AG04449 (cell line): ENCODE measurements at regions of chr12 and their contacts with region 1.

Region 1: DNA sequence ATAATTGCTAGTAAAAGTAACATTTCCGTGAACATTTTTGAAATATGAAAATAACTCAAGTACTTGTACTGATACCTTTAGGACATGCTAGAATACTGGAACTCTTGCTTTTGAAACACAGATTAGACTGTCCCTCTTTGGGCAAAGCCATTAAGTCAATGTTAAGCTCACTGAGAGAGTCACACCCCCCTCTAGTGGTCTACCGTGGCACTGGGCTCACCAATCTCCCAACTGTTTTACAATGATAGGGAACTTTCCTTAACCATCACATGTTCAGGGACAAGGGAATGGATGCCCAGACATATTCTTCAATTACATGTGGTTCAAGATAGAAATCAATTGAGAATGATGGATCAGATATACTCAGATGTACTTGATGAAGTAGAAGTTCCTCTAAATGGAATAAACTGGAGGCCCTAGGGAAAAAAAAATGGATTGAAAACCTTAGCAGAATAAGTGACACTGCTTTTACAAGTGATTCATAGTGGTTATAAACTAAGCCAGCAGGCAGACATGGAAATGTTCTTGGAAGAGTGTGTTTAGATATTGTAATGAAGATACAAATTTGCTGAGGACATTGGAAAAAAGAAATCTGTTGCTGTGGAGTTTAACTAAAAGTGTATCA is 17.8 kb downstream of the NANOG start:
- DNase-seq: no peak
- H3K4me3 ChIP-seq: no peak overlapping the region
- CTCF ChIP-seq: peak; percentile 84

Region 2: GRCh38 chr12:7242176-7243101 is 564.5 kb before region 1 on chr12:
- CTCF ChIA-PET with region 1: no interaction called
- POLR2A ChIA-PET with region 1: no interaction called
- DNase-seq: no peak
- H3K4me3 ChIP-seq: no peak overlapping the region
- CTCF ChIP-seq: no peak

Region 3: GRCh38 chr12:7645394-7646177 is 161.4 kb before region 1 on chr12:
- CTCF ChIA-PET with region 1: interaction called, 26 read pairs
- POLR2A ChIA-PET with region 1: no interaction called
- DNase-seq: no peak
- H3K4me3 ChIP-seq: no peak overlapping the region
- CTCF ChIP-seq: peak; percentile 61

Region 4: DNA sequence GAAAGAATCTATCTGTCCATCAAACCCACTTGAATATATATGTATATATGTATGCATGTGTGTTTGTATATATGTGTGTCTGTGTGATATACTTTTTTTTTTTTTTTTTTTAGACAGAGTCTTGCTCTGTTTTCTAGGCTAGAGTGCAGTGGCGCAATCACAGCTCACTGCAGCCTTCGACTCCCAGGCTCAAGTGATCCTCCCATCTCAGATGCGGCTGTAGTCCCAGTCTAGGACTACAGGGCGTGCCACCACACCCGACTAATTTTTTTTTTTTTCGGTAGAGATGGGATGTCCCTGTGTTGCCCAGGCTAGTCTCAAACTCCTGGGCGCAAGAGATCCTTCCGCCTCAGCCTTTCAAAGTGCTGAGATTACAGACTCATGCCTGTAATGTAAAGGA is 128.2 kb before region 1 on chr12:
- CTCF ChIA-PET with region 1: interaction called, 81 read pairs
- POLR2A ChIA-PET with region 1: no interaction called
- DNase-seq: no peak
- H3K4me3 ChIP-seq: no peak overlapping the region
- CTCF ChIP-seq: no peak

Region 5: GRCh38 chr12:7719946-7720730 is 86.8 kb before region 1 on chr12:
- CTCF ChIA-PET with region 1: no interaction called
- POLR2A ChIA-PET with region 1: no interaction called
- DNase-seq: no peak
- H3K4me3 ChIP-seq: no peak overlapping the region
- CTCF ChIP-seq: no peak

Region 6: GRCh38 chr12:7769999-7770398 is 37.0 kb before region 1 on chr12:
- CTCF ChIA-PET with region 1: no interaction called
- POLR2A ChIA-PET with region 1: no interaction called
- DNase-seq: no peak
- H3K4me3 ChIP-seq: no peak overlapping the region
- CTCF ChIP-seq: no peak

Region 7: GRCh38 chr12:7832059-7832696 is 25.2 kb after region 1 on chr12:
- CTCF ChIA-PET with region 1: interaction called, 15 read pairs
- POLR2A ChIA-PET with region 1: no interaction called
- DNase-seq: peak; percentile 34
- H3K4me3 ChIP-seq: no peak overlapping the region
- CTCF ChIP-seq: peak; percentile 64